ENCODE measurements at regions of chr22 and their contacts with region 1.

Region 1: DNA sequence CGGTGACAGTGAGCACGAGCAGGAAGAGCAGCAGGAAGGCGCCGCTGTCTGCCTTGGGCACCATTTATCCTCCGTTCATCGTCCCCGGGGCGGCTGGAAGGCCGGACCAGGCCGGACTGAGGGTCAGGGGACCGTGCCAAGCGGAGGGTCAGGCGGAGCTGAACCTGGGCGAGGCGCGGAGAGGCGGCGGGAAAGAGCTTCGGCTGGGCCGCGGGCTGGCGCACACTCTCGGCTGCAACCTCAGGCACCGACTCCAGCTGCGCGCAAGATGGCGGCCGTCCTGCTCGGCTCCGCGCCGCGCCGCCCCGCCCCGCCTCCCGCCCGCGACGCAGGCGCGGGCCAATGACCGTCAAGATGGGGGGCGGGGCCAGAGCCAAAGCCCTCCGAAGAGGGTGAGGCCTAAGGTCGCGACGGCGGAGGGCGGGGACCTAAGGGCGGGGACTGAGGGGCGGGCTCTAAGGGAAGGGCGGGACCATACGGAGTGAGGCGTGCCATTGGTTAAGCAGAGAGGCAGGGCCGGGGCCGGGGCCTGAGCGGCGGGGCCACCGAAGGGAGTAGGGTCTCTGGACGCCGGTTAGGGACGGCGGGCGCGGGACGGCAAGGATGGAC is at the start of gene DGCR2:
- DNase-seq: peak; percentile 93 to 95 (median 95)
- H3K4me3 ChIP-seq: peak within 1 kb of the TSS; percentile 52 to 85
- H3K4me3 Mint-ChIP-seq: peak within 1 kb of the TSS; percentile 87 to 96 (median 92)
- H3K27ac ChIP-seq: peak within 1 kb of the TSS; percentile 69
- H3K27ac Mint-ChIP-seq: peak within 1 kb of the TSS; percentile 86 to 96 (median 93)
- H3K4me1 ChIP-seq: peaks cover 49% of the 10 kb centered on the region
- H3K4me1 Mint-ChIP-seq: peaks cover 33 to 56% (median 43%) of the 10 kb centered on the region in 4 donors
- H3K27me3 ChIP-seq: no peaks in the 10 kb centered on the region
- H3K27me3 Mint-ChIP-seq: peaks cover 0 to 2% of the 10 kb centered on the region in 2 donors
- total RNA-seq, gene DGCR2: 61.3 to 66.7 TPM

Region 2: DNA sequence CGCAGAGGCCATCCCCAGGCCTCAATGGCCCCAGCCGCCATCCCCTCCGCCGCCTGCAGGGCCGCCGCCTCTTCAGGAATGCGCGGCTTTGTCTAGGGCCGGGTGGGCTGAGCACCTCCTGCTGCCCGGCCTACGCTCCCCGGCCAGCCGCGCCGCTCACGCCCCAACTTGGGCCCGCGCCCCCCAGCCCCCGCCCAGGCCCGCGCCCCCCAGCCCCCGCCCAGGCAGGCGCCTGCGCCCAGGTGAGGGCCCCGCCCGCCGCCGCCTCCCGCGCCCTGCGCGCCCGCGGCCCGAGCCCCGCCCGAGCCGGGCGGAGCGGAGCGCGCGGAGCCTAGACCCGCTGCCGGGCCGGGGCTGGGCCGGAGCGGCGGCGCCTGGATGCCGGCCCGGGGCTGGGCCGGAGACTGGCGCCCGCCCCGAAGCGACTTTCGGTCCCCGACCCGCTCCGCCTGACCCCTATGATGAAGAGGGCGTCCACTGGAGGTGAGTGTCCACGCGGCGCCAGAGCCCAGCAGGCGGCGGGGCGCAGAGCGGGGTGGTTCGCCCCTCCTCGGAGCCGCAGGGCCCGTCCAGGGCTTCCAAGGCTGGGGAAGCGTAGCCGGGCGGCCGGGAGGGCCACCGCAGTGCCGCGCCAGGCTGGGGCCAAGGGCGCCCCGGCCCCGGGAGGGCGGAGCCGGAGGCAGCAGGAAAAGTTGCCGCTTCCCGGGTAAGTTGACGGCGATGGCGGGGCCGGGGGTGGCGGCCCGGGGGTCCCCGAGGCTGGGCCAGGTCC is 151.9 kb before region 1 on chr22:
- CTCF ChIA-PET with region 1: no interaction called
- POLR2A ChIA-PET with region 1: no interaction called
- intact Hi-C with region 1: no loop called
- DNase-seq: no peak
- H3K4me3 ChIP-seq: no peak overlapping the region
- H3K4me3 Mint-ChIP-seq: no peak overlapping the region
- H3K27ac ChIP-seq: no peak overlapping the region
- H3K27ac Mint-ChIP-seq: no peak overlapping the region
- H3K4me1 ChIP-seq: peaks cover 6% of the 10 kb centered on the region
- H3K4me1 Mint-ChIP-seq: peaks cover 0 to 5% (median under 1%) of the 10 kb centered on the region in 4 donors
- H3K27me3 ChIP-seq: peaks cover 7% of the 10 kb centered on the region
- H3K27me3 Mint-ChIP-seq: peaks cover 12% of the 10 kb centered on the region in 2 donors

Region 3: GRCh38 chr22:19109198-19110067 is 12.8 kb before region 1 on chr22:
- CTCF ChIA-PET with region 1: interaction called, 13 read pairs
- POLR2A ChIA-PET with region 1: interaction called, 61 read pairs
- intact Hi-C with region 1: loop called (anchors 1 kb)
- DNase-seq: peak; percentile 75 to 86 (median 82)
- H3K4me3 ChIP-seq: peak overlapping the region; percentile 26 to 29
- H3K4me3 Mint-ChIP-seq: peak overlapping the region; percentile 77 to 89 (median 84)
- H3K27ac ChIP-seq: peak overlapping the region; percentile 80
- H3K27ac Mint-ChIP-seq: peak overlapping the region; percentile 79 to 99 (median 97)
- H3K4me1 ChIP-seq: peaks cover 66% of the 10 kb centered on the region
- H3K4me1 Mint-ChIP-seq: peaks cover 51 to 76% (median 62%) of the 10 kb centered on the region in 4 donors
- H3K27me3 ChIP-seq: no peaks in the 10 kb centered on the region
- H3K27me3 Mint-ChIP-seq: no peaks in the 10 kb centered on the region

Region 4: DNA sequence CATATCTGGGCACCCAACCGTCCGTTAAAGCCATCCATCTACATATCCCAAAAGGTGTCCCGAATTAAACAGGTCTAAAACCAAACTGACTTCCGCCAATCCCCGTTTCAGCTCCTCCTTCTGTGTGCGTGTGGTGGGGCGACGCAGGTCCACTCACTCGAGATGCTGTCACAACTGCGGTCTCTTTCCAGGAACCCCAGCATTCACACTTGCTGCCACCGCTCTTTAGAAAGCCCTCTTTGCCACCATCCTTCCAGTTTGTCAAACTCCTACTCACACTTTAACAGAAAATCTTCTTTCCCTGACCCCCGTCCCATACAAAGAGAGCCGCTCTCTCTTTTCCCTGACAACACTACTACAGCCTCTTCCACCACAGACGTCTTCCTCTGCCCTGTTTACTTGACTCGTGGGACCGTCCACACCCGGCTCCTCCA is 21.7 kb after region 1 on chr22:
- CTCF ChIA-PET with region 1: interaction called, 11 read pairs
- POLR2A ChIA-PET with region 1: interaction called, 29 read pairs
- intact Hi-C with region 1: loop called (anchors 1 kb)
- DNase-seq: peak; percentile 22 to 59 (median 44)
- H3K4me3 ChIP-seq: peak overlapping the region; percentile 86 to 94
- H3K4me3 Mint-ChIP-seq: peak overlapping the region; percentile 96 to 100 (median 98)
- H3K27ac ChIP-seq: peak overlapping the region; percentile 81
- H3K27ac Mint-ChIP-seq: peak overlapping the region; percentile 90 to 99 (median 98)
- H3K4me1 ChIP-seq: peaks cover 12% of the 10 kb centered on the region
- H3K4me1 Mint-ChIP-seq: peaks cover 11 to 25% (median 18%) of the 10 kb centered on the region in 4 donors
- H3K27me3 ChIP-seq: peaks cover 7% of the 10 kb centered on the region
- H3K27me3 Mint-ChIP-seq: peaks cover 2 to 6% of the 10 kb centered on the region in 2 donors

Region 5: DNA sequence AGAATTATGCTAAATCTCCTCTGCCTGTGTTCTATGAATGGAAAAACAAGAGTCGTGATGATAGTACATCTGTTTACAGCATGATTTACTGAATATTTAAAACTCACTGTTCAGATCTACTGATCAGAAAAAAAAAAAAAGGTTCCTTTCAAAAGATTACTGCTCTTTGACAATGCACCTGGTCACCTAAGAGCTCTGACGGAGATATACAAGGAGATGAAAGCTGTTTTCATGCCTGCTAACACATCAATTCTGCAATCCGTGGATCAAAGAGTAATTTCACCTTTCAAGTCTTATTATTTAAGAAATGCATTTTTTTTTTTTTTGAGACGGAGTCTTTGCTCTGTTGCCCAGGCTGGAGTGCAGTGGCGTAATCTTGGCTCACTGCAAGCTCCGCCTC is 138.6 kb after region 1 on chr22:
- CTCF ChIA-PET with region 1: no interaction called
- POLR2A ChIA-PET with region 1: no interaction called
- intact Hi-C with region 1: no loop called
- DNase-seq: peak in 2 of 5 donors; percentile 3 to 18
- H3K4me3 ChIP-seq: no peak overlapping the region
- H3K4me3 Mint-ChIP-seq: peak overlapping the region in 3 of 8 donors; percentile 15 to 50 (median 44)
- H3K27ac ChIP-seq: no peak overlapping the region
- H3K27ac Mint-ChIP-seq: peak overlapping the region in 1 of 7 donors; percentile 26
- H3K4me1 ChIP-seq: peaks cover 7% of the 10 kb centered on the region
- H3K4me1 Mint-ChIP-seq: peaks cover 10 to 22% (median 14%) of the 10 kb centered on the region in 4 donors
- H3K27me3 ChIP-seq: no peaks in the 10 kb centered on the region
- H3K27me3 Mint-ChIP-seq: peaks cover 0 to 5% of the 10 kb centered on the region in 2 donors

Region 6: GRCh38 chr22:19291580-19292457 is 169.6 kb after region 1 on chr22 and contains the start of gene CLTCL1:
- CTCF ChIA-PET with region 1: no interaction called
- POLR2A ChIA-PET with region 1: interaction called, 3 read pairs
- intact Hi-C with region 1: loop called (anchors 5 kb)
- DNase-seq: peak; percentile 49 to 73 (median 62)
- H3K4me3 ChIP-seq: peak within 1 kb of the TSS; percentile 43 to 92
- H3K4me3 Mint-ChIP-seq: peak within 1 kb of the TSS; percentile 87 to 93 (median 91)
- H3K27ac ChIP-seq: peak within 1 kb of the TSS; percentile 58
- H3K27ac Mint-ChIP-seq: peak within 1 kb of the TSS; percentile 42 to 92 (median 88)
- H3K4me1 ChIP-seq: peaks cover 25% of the 10 kb centered on the region
- H3K4me1 Mint-ChIP-seq: peaks cover 12 to 31% (median 21%) of the 10 kb centered on the region in 4 donors
- H3K27me3 ChIP-seq: no peaks in the 10 kb centered on the region
- H3K27me3 Mint-ChIP-seq: peaks cover 7 to 17% of the 10 kb centered on the region in 2 donors
- total RNA-seq, gene CLTCL1: 0.80 to 1.7 TPM

Measured in CD4-positive, alpha-beta memory T cell (primary cell).